Activated CD4-positive, alpha-beta T cell treated with anti-CD3 and anti-CD28 coated beads, Interleukin-2, amount 10 ng/mL, durations not matched to agents 24 days and 14 days (primary cell): ENCODE measurements at regions of chr6 and their contacts with region 1.

Region 1: GRCh38 chr6:143806282-143807102 is 36.6 kb upstream of the LTV1 start:
- DNase-seq: peak; percentile 84
- H3K4me3 Mint-ChIP-seq: peak overlapping the region; percentile 62
- H3K27ac Mint-ChIP-seq: peak overlapping the region; percentile 91
- H3K4me1 Mint-ChIP-seq: peaks cover 46% of the 10 kb centered on the region
- H3K27me3 Mint-ChIP-seq: peaks cover 2% of the 10 kb centered on the region

Region 2: GRCh38 chr6:143450453-143451371 is 355.8 kb before region 1 on chr6 and contains the starts of genes ADAT2 and PEX3:
- intact Hi-C with region 1: loop called (anchors 5 kb)
- DNase-seq: peak; percentile 98
- H3K4me3 Mint-ChIP-seq: peak within 1 kb of the TSS; percentile 91
- H3K27ac Mint-ChIP-seq: peak within 1 kb of the TSS; percentile 99
- H3K4me1 Mint-ChIP-seq: peaks cover 36% of the 10 kb centered on the region
- H3K27me3 Mint-ChIP-seq: no peaks in the 10 kb centered on the region
- total RNA-seq, gene ADAT2: 46.0 and 47.7 TPM in 2 replicates
- total RNA-seq, gene PEX3: 26.0 and 28.5 TPM in 2 replicates

Region 3: GRCh38 chr6:143515061-143515760 is 291.3 kb before region 1 on chr6:
- intact Hi-C with region 1: no loop called
- DNase-seq: no peak
- H3K4me3 Mint-ChIP-seq: no peak overlapping the region
- H3K27ac Mint-ChIP-seq: no peak overlapping the region
- H3K4me1 Mint-ChIP-seq: peaks cover 34% of the 10 kb centered on the region
- H3K27me3 Mint-ChIP-seq: no peaks in the 10 kb centered on the region

Region 4: DNA sequence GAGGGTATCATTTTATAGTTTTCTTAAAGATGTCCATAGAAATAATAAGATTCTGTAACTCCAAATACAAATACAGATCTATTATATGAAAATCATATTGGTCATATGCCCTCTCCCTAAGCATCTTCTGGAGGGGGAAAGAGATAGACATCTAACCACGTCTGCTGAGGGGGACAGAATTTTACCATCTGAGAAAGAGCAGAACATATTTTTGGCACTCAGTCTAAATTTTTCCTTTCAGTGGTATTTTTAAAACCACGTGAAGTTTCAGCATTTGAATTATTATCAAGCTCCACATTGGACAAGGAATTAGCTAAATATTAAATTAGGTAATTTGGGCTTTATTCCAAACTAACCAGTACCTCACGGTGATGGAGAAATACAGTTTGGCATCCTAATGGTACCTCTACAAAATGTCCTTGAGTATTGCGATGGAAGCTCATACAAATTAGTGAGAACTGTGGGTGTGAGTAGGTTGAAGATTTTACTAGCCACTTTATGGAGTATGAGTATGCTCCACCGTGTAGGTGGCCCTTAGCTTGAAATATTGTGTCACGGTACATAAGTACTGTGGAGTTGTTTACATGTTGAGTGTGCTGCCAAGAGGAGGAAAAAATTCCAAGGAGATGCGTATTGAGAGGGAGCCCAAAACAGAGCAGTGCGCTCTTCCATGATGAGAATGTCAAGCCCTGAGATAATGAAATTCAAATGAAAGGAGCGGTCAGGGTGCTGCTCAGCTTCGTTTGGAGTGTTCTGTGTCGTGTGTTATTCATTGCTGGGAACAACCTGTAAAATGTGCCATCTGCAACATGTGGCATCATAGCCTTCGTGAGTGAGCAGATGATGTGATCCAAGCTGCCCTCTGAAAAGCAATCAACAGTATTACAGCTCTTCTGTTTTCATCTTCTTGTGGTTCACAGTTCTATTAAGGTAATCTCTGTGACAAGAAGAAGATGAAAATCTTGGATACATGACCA is 177.1 kb before region 1 on chr6:
- intact Hi-C with region 1: loop called (anchors 1 kb)
- DNase-seq: no peak
- H3K4me3 Mint-ChIP-seq: peak overlapping the region; percentile 3
- H3K27ac Mint-ChIP-seq: peak overlapping the region; percentile 72
- H3K4me1 Mint-ChIP-seq: peaks cover 36% of the 10 kb centered on the region
- H3K27me3 Mint-ChIP-seq: no peaks in the 10 kb centered on the region

Region 5: DNA sequence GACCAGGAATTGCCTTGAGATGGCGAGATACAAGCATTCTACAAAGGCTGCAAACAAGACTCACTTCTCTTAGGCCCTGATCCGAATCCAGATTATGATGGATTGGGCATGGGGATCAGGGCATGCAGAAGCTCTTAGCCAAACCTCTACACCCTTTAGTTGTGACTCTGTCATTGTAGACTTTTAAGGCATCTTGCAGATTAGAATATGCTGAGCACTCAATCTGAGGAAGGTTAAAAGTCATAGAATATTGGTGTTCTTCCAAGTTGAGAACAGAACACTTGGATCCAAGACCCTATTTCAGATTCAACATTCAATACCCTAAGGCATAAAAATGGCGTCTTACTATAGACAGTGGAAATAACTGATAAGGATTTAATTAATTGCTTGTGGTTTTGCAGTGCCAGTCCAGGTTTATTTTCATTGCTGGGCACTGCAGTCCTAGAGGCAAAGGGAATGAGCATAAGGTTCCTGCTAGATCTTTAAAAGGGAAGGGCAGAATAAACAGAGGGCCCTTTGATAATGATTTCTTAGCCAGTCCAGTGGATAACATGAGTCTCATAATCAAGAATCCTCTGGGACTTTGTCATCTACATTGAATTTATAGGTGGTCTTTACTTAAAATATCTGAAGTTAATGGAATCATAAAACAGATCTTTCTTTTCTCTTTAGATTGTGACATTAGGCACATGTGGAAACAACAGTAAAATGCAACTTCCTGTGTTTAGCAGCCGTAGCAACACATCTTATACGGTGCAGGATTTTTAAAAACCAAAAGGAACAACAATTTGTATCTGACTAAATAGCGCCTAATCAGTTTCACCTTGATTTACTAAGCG is 111.1 kb before region 1 on chr6:
- intact Hi-C with region 1: loop called (anchors 10 kb)
- DNase-seq: no peak
- H3K4me3 Mint-ChIP-seq: no peak overlapping the region
- H3K27ac Mint-ChIP-seq: no peak overlapping the region
- H3K4me1 Mint-ChIP-seq: peaks cover 31% of the 10 kb centered on the region
- H3K27me3 Mint-ChIP-seq: no peaks in the 10 kb centered on the region

Region 6: GRCh38 chr6:143772116-143773086 is 34.1 kb before region 1 on chr6:
- intact Hi-C with region 1: no loop called
- DNase-seq: peak; percentile 25
- H3K4me3 Mint-ChIP-seq: no peak overlapping the region
- H3K27ac Mint-ChIP-seq: peak overlapping the region; percentile 36
- H3K4me1 Mint-ChIP-seq: peaks cover 4% of the 10 kb centered on the region
- H3K27me3 Mint-ChIP-seq: no peaks in the 10 kb centered on the region

Region 7: DNA sequence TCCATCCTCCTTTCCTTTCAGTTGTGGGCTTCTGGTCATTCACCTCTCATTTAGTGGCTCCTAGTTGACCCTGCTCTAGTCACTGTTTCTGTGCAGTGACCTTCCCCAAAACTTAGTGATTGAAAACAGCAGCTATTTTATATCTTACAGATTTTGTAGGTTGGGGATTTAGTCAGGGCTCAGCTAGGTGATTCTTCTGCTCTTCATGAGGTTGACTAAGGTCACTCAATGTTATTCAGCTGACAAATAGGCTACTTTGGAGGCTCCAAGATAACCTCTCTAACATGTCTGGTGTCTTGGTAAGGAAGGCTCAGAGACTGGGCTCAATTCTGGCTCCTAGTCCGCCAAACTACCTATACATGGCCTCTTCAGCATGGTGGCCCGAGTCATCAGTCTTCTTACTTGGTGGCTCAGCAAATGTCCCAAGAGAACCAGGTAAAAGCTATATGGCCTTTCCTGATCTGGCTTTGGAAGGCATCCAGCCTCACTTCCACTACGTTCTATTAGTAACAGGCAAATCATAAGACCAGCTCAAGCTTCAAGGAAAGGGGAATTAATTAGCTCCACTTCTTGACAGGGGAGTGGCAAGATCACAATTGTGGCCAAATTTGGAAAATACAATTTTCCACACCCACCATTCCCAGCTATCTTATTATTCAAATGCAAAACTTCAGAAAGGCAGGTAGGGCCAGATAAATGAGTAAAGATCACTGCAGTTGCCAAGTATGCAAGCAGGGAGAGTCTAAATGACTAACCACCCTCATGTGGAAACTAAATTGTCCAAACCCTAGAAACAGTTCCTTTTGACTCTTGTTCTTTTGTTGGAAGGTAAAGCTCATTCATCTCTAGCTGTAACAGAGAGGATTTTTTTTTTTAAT is 13.9 kb before region 1 on chr6:
- intact Hi-C with region 1: no loop called
- DNase-seq: no peak
- H3K4me3 Mint-ChIP-seq: no peak overlapping the region
- H3K27ac Mint-ChIP-seq: no peak overlapping the region
- H3K4me1 Mint-ChIP-seq: no peaks in the 10 kb centered on the region
- H3K27me3 Mint-ChIP-seq: no peaks in the 10 kb centered on the region

Region 8: GRCh38 chr6:143842902-143843676 is 36.6 kb after region 1 on chr6 and contains the start of gene LTV1:
- intact Hi-C with region 1: loop called (anchors 1 kb)
- DNase-seq: peak; percentile 98
- H3K4me3 Mint-ChIP-seq: peak within 1 kb of the TSS; percentile 99
- H3K27ac Mint-ChIP-seq: peak within 1 kb of the TSS; percentile 97
- H3K4me1 Mint-ChIP-seq: peaks cover 19% of the 10 kb centered on the region
- H3K27me3 Mint-ChIP-seq: no peaks in the 10 kb centered on the region
- total RNA-seq, gene LTV1: 61.3 and 63.8 TPM in 2 replicates

Region 9: DNA sequence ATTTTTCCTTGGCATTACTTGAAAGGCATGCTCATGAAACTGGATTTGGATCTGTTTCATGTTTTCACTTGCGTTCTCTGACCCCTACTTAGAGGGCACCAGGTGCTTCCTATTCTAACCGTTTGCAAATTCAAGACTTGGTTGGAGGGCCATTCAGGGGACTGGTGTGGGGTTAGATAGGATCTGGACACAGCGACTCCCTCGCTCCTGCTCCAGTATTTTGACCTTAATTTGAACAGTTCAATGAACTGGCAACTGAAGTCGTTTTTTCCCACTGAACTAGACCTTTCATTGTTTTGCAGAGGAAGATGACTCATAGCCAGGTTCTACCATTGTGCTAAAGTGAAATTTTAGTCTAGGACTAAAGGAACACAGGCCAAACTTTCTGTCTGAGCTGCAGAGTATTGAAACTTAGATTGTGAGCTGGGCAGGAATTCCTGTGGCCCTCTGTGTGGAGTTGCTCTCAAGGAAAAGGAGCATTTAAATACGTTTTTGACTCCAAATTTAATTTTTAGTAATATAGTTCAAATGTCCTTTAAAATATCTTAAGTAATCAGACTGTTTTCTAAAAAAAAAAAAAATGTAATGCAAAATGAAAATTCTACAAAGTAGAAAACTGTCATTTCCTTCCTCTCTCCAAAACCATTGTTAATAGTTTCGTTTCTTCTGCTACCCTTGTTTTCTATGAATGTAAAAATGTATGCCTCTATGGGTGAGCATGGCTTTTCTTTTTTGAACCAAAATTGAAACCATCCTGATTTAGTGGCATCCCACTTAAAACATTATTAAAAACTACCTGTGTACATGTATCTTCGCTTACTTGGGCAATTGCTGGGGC is 543.4 kb after region 1 on chr6:
- intact Hi-C with region 1: loop called (anchors 10 kb)
- DNase-seq: peak; percentile 78
- H3K4me3 Mint-ChIP-seq: peak overlapping the region; percentile 80
- H3K27ac Mint-ChIP-seq: peak overlapping the region; percentile 92
- H3K4me1 Mint-ChIP-seq: peaks cover 74% of the 10 kb centered on the region
- H3K27me3 Mint-ChIP-seq: no peaks in the 10 kb centered on the region